Mammary epithelial cell (primary cell): ENCODE measurements at regions of chr5 and their contacts with region 1.

Region 1: GRCh38 chr5:41346609-41347008 is 133.3 kb upstream of the C6 start:
- DNase-seq: no peak
- H3K4me3 ChIP-seq: no peak overlapping the region
- H3K27ac ChIP-seq: no peak overlapping the region
- H3K4me1 ChIP-seq: no peaks in the 10 kb centered on the region
- H3K27me3 ChIP-seq: peaks cover 1% of the 10 kb centered on the region
- CTCF ChIP-seq: peak in 1 of 2 donors; percentile 25

Region 2: DNA sequence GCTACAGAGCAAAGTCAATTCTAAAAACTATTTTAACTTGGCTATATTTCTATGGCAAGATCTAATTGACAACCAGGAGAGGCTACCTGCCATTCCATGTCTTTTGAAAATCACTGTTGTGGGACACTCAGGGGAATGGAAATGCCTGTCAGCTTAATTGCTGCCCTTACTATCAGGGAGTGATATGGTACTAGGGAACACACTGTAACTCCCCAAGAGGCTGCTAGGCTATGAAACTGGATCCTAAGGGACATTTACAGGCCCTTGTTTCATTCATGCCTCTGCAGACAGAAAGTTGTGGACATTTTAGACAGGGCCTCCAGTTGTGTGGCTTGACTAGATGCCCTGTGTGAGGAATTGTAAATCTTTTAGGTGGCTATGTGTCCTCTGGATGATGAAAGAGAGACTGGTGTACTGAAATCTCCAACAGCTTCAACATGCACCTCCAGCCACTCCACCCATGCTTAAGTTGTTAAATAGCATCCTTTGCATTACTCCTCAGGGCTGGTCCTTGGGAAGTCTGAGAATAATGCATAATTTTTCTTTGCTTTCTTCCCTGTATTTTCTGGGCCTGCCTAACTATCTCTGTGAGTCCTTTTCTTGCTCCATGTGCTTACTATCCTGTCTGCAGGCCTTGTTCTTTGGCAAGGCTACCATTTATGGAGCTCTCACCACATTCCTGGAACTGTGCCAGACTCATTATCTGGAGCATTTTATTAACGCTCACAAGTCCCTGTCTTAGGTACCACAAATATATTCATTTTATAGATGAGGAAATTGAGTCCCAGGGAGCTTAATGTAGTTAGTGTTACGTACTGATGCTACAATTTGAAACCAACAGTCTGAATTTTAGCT is 278.7 kb before region 1 on chr5:
- CTCF ChIA-PET with region 1: no interaction called
- dilution Hi-C with region 1: no loop called
- in situ Hi-C with region 1: no loop called
- intact Hi-C with region 1: no loop called
- DNase-seq: peak; percentile 1
- H3K4me3 ChIP-seq: no peak overlapping the region
- H3K27ac ChIP-seq: no peak overlapping the region
- H3K4me1 ChIP-seq: no peaks in the 10 kb centered on the region
- H3K27me3 ChIP-seq: peaks cover 7% of the 10 kb centered on the region
- CTCF ChIP-seq: no peak

Region 3: GRCh38 chr5:41524174-41524573 is 177.6 kb after region 1 on chr5:
- CTCF ChIA-PET with region 1: no interaction called
- dilution Hi-C with region 1: no loop called
- in situ Hi-C with region 1: no loop called
- intact Hi-C with region 1: loop called (anchors 5 kb)
- DNase-seq: no peak
- H3K4me3 ChIP-seq: no peak overlapping the region
- H3K27ac ChIP-seq: no peak overlapping the region
- H3K4me1 ChIP-seq: peaks cover 8% of the 10 kb centered on the region
- H3K27me3 ChIP-seq: no peaks in the 10 kb centered on the region
- CTCF ChIP-seq: peak; percentile 19 to 44

Region 4: DNA sequence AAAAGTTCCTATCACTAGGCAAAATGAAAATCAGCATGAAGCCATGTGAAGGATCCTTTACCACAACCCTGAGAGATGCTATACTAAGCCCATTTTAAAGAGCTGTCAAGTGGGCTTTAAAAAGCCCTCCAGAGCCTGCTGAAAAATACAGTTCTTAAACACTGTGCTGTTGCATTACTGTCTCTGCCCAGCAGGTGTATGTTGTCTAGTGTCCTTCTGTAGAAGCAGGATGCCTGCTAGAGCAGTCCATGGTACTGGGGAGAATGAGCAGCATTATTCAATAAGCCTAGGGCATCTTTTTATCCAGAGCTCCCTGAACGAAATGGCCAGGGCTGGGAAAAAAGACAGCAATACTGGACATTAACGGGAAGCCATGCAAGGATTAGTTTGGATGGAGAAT is 290.0 kb after region 1 on chr5:
- CTCF ChIA-PET with region 1: no interaction called
- dilution Hi-C with region 1: no loop called
- in situ Hi-C with region 1: no loop called
- intact Hi-C with region 1: loop called (anchors 5 kb)
- DNase-seq: peak; percentile 10
- H3K4me3 ChIP-seq: no peak overlapping the region
- H3K27ac ChIP-seq: no peak overlapping the region
- H3K4me1 ChIP-seq: no peaks in the 10 kb centered on the region
- H3K27me3 ChIP-seq: no peaks in the 10 kb centered on the region
- CTCF ChIP-seq: peak; percentile 37 to 48